Ascending aorta (tissue), 2 donors: ENCODE measurements at regions of chr5 and their contacts with region 1.

Region 1: GRCh38 chr5:172714491-172715421 is 56.2 kb downstream of the DUSP1 start:
- DNase-seq: peak; percentile 73 to 94
- H3K4me3 ChIP-seq: no peak overlapping the region
- H3K27ac ChIP-seq: peak overlapping the region; percentile 79 to 83
- H3K4me1 ChIP-seq: peaks cover 20 to 26% of the 10 kb centered on the region in 2 donors
- H3K27me3 ChIP-seq: no peaks in the 10 kb centered on the region
- CTCF ChIP-seq: peak; percentile 80 to 84 (median 83)

Region 2: GRCh38 chr5:172733131-172733973 is 18.6 kb after region 1 on chr5:
- intact Hi-C with region 1: loop called (anchors 2 kb)
- DNase-seq: peak; percentile 71 to 97
- H3K4me3 ChIP-seq: peak overlapping the region in 1 of 2 donors; percentile 34
- H3K27ac ChIP-seq: peak overlapping the region; percentile 96 to 97
- H3K4me1 ChIP-seq: peaks cover 23 to 37% of the 10 kb centered on the region in 2 donors
- H3K27me3 ChIP-seq: no peaks in the 10 kb centered on the region
- CTCF ChIP-seq: no peak

Region 3: GRCh38 chr5:172868924-172869591 is 154.3 kb after region 1 on chr5:
- intact Hi-C with region 1: loop called (anchors 1 kb)
- DNase-seq: peak; percentile 83 to 98
- H3K4me3 ChIP-seq: peak overlapping the region; percentile 12 to 34
- H3K27ac ChIP-seq: peak overlapping the region; percentile 99
- H3K4me1 ChIP-seq: peaks cover 47 to 80% of the 10 kb centered on the region in 2 donors
- H3K27me3 ChIP-seq: no peaks in the 10 kb centered on the region
- CTCF ChIP-seq: peak; percentile 44 to 56 (median 56)

Region 4: GRCh38 chr5:172958331-172959046 is 243.7 kb after region 1 on chr5:
- intact Hi-C with region 1: loop called (anchors 1 kb)
- DNase-seq: peak in 1 of 2 donors; percentile 86
- H3K4me3 ChIP-seq: peak overlapping the region; percentile 67 to 69
- H3K27ac ChIP-seq: peak overlapping the region; percentile 87 to 95
- H3K4me1 ChIP-seq: peaks cover 6 to 44% of the 10 kb centered on the region in 2 donors
- H3K27me3 ChIP-seq: no peaks in the 10 kb centered on the region
- CTCF ChIP-seq: no peak

Region 5: GRCh38 chr5:173144200-173145176 is 429.7 kb after region 1 on chr5 and contains the start of gene BNIP1:
- intact Hi-C with region 1: loop called (anchors 5 kb)
- DNase-seq: peak; percentile 78 to 96
- H3K4me3 ChIP-seq: peak within 1 kb of the TSS; percentile 58 to 98
- H3K27ac ChIP-seq: peak within 1 kb of the TSS; percentile 82 to 86
- H3K4me1 ChIP-seq: peaks cover 0 to 4% of the 10 kb centered on the region in 2 donors
- H3K27me3 ChIP-seq: no peaks in the 10 kb centered on the region
- CTCF ChIP-seq: peak; percentile 82 to 91 (median 90)
- total RNA-seq, gene BNIP1: 11.3 TPM